ENCODE measurements at regions of chr6 and their contacts with region 1.

Region 1: DNA sequence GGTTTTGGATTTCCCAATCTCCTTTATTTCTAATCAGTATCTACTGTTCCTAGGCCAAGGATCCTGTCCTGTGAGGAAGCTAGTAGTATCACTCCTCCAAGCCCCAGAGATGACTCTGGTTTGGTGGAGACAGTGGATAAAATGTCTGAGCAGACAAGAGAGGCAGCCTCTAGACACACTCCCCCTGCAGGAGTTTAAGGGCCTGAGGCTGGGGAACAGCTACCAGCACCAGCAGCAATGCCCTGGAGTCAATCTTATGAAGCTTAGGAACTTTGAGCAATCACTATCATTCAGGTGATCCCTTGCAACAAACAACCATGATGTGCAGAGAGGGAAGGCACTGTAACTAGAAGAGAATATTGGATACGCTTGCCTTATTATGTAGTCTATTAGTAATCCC is 384.7 kb upstream of the ID4 start:
- DNase-seq: peak; percentile 30
- ATAC-seq: no peak
- H3K4me3 ChIP-seq: no peak overlapping the region
- H3K27ac ChIP-seq: no peak overlapping the region
- H3K4me1 ChIP-seq: peaks cover 29% of the 10 kb centered on the region
- H3K27me3 ChIP-seq: no peaks in the 10 kb centered on the region
- CTCF ChIP-seq: peak; percentile 27; the same call in 1 of the 2 replicates

Region 2: GRCh38 chr6:19024737-19025136 is 427.8 kb before region 1 on chr6:
- CTCF ChIA-PET with region 1: no interaction called
- POLR2A ChIA-PET with region 1: no interaction called
- intact Hi-C with region 1: loop called (anchors 10 kb)
- DNase-seq: peak; percentile 81
- ATAC-seq: peak; percentile 91
- H3K4me3 ChIP-seq: no peak overlapping the region
- H3K27ac ChIP-seq: no peak overlapping the region
- H3K4me1 ChIP-seq: peaks cover 9% of the 10 kb centered on the region; the same call in 1 of the 2 replicates
- H3K27me3 ChIP-seq: no peaks in the 10 kb centered on the region
- CTCF ChIP-seq: peak; percentile 85

Region 3: DNA sequence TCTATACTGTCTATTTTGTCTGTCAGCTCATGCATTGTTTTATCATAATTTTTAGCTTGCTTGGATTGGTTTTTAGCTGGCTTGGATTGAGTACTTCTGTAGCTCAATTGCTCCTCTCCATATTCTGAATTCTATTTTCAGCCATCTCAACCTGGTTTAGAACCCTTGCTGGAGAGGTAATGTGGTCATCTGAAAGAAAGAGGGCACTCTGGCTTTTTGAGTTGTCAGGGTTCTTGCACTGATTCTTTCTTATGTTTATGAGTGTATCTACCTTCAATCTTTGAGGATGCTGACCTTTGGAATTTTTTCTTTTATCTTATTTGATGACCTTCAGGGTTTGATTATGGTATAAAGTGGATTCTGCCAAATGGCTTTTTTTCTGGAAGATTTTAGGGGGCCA is 248.1 kb before region 1 on chr6:
- CTCF ChIA-PET with region 1: no interaction called
- POLR2A ChIA-PET with region 1: no interaction called
- intact Hi-C with region 1: loop called (anchors 10 kb)
- DNase-seq: peak; percentile 28
- ATAC-seq: no peak
- H3K4me3 ChIP-seq: no peak overlapping the region
- H3K27ac ChIP-seq: no peak overlapping the region
- H3K4me1 ChIP-seq: peaks cover 6% of the 10 kb centered on the region
- H3K27me3 ChIP-seq: no peaks in the 10 kb centered on the region
- CTCF ChIP-seq: peak; percentile 56

Region 4: DNA sequence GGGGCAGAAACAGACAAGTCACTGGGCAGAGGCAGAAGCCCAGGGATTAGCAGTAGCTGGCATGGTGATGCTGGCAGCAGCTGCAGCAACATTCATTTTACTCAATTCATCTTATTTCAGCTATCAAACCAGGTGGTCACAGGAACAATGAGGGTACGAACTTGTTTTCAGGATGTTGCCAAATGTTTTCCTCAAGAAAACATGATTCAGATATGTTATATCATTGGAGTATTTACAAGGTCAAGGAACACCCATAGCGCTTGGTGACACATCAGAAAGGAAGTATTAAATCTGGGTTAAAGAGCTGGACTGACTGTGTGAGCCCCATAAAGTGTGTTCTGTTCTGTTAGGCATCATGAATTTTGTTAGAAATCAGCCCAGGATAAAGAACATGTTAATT is 72.2 kb before region 1 on chr6:
- CTCF ChIA-PET with region 1: interaction called, 7 read pairs
- POLR2A ChIA-PET with region 1: no interaction called
- intact Hi-C with region 1: loop called (anchors 1 kb)
- DNase-seq: peak; percentile 90
- ATAC-seq: peak; percentile 92
- H3K4me3 ChIP-seq: no peak overlapping the region
- H3K27ac ChIP-seq: peak overlapping the region; percentile 70
- H3K4me1 ChIP-seq: peaks cover 30% of the 10 kb centered on the region
- H3K27me3 ChIP-seq: no peaks in the 10 kb centered on the region
- CTCF ChIP-seq: no peak

Region 5: GRCh38 chr6:19415585-19416326 is 36.7 kb before region 1 on chr6:
- CTCF ChIA-PET with region 1: no interaction called
- POLR2A ChIA-PET with region 1: interaction called, 4 read pairs
- intact Hi-C with region 1: loop called (anchors 2 kb)
- DNase-seq: peak; percentile 92
- ATAC-seq: peak; percentile 82
- H3K4me3 ChIP-seq: no peak overlapping the region
- H3K27ac ChIP-seq: peak overlapping the region; percentile 89
- H3K4me1 ChIP-seq: peaks cover 59% of the 10 kb centered on the region
- H3K27me3 ChIP-seq: no peaks in the 10 kb centered on the region
- CTCF ChIP-seq: no peak

Region 6: DNA sequence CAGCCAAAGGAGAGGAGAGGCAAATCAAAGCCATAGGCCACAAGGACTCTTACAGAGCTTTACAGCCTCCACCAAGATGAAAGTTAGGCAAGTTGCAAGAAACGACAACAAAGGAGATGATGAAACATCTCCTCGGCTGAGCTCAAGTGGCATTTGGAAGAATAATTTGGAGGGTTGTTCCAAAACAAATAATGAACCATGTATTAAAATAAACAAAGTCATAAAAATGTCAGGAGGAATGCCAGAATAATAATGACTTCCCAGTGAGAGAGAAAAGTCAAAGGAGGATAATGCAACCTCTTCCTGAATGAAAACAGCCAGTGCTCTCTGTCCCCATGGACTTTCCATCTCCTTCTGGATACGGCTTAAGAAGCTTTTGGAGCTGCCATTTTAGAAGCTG is 13.3 kb after region 1 on chr6:
- CTCF ChIA-PET with region 1: no interaction called
- POLR2A ChIA-PET with region 1: no interaction called
- intact Hi-C with region 1: loop called (anchors 1 kb)
- DNase-seq: peak; percentile 96
- ATAC-seq: peak; percentile 85
- H3K4me3 ChIP-seq: peak overlapping the region; percentile 52
- H3K27ac ChIP-seq: peak overlapping the region; percentile 91
- H3K4me1 ChIP-seq: peaks cover 24% of the 10 kb centered on the region
- H3K27me3 ChIP-seq: no peaks in the 10 kb centered on the region
- CTCF ChIP-seq: no peak

Region 7: DNA sequence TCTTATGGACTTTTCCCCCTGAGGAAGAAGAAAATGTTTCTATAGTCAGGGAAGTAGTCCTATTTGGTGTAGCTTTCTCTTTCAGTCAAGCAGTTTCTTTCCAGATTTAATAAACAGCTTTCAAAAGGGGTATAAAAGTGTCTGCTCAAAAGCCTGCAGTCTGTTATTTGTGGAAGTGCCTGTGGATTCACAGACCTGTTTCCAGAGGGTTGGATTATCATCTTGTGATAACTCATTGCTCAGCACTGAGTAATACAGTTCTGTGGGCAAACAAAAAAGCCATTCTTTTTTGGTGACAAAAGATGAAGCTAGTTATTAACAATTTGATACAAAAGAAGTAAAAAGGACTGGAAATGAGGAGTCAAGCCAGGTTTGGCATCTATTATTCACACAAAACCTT is 26.5 kb after region 1 on chr6:
- CTCF ChIA-PET with region 1: no interaction called
- POLR2A ChIA-PET with region 1: no interaction called
- intact Hi-C with region 1: no loop called
- DNase-seq: peak; percentile 83
- ATAC-seq: peak; percentile 97
- H3K4me3 ChIP-seq: no peak overlapping the region
- H3K27ac ChIP-seq: no peak overlapping the region
- H3K4me1 ChIP-seq: peaks cover 28% of the 10 kb centered on the region
- H3K27me3 ChIP-seq: no peaks in the 10 kb centered on the region
- CTCF ChIP-seq: no peak

Region 8: DNA sequence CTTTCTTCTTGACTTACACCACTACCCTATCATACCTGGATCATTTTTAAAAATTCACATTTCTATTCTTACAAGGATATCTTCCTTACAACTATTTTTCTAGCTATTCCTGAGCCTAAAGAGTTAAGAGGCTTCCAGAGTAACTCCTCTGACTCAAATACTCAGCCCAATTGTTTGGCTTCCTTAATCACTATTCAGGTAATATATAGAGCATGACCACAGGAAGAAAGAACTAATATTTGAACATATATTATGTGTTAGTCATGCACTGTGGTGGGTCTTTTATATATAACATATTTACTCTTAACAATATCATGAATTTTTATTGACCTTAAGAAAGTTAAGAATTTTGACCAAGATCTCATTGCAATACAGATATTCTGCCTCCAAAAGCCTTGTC is 342.7 kb after region 1 on chr6:
- CTCF ChIA-PET with region 1: no interaction called
- POLR2A ChIA-PET with region 1: no interaction called
- intact Hi-C with region 1: loop called (anchors 2 kb)
- DNase-seq: peak; percentile 93
- ATAC-seq: peak; percentile 98
- H3K4me3 ChIP-seq: no peak overlapping the region
- H3K27ac ChIP-seq: peak overlapping the region; percentile 71
- H3K4me1 ChIP-seq: peaks cover 24% of the 10 kb centered on the region
- H3K27me3 ChIP-seq: no peaks in the 10 kb centered on the region
- CTCF ChIP-seq: no peak